Dorsolateral prefrontal cortex (tissue), 120 donors: ENCODE measurements at regions of chr19 and their contacts with region 1.

Region 1: DNA sequence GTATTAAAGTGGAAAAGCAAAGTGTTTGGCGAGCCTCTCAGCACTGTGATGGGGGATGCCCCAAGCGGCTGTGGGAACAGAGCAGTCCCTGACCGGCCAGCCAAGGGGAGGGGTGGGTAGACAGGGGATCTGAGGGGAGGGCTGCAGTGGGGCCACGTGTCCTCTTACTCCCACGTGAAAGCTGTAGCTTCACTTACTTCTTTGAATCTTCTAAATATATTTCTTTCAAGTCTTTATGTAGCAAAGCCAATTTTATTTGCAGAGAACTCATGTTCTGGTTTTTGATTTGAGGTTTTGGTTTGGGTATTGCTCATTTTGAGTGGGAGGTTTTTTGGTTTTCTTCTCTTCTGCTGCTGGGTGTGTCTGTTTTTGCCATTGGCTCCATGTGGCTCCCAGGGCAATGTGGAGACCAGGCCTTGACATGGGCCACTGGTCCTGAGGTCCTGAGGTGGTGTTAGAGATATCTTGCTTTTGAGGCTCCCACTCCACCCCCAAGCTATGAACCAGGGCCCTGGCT is 17.7 kb upstream of the OVOL3 start:
- DNase-seq: no peak
- H3K4me3 ChIP-seq: no peak overlapping the region
- H3K27ac ChIP-seq: peak overlapping the region; percentile 36 to 98 (median 87)
- H3K27me3 ChIP-seq: no peaks in the 10 kb centered on the region
- CTCF ChIP-seq: no peak

Region 2: GRCh38 chr19:35879770-35880317 is 213.4 kb before region 1 on chr19:
- intact Hi-C with region 1: no loop called
- DNase-seq: peak; percentile 76 to 89 (median 84)
- H3K4me3 ChIP-seq: peak overlapping the region in 28 of 59 donors; percentile 0 to 46 (median 20)
- H3K27ac ChIP-seq: peak overlapping the region in 28 of 59 donors; percentile 1 to 65 (median 38)
- H3K27me3 ChIP-seq: no peaks in the 10 kb centered on the region
- CTCF ChIP-seq: peak in 13 of 56 donors; percentile 11 to 47 (median 23)

Region 3: GRCh38 chr19:36081385-36081784 is 11.8 kb before region 1 on chr19:
- intact Hi-C with region 1: loop called in 1 of 2 experiments (anchors 1 kb)
- DNase-seq: peak in 7 of 10 donors; percentile 53 to 88 (median 69)
- H3K4me3 ChIP-seq: peak overlapping the region in 3 of 59 donors; percentile 2 to 24 (median 12)
- H3K27ac ChIP-seq: peak overlapping the region; percentile 0 to 94 (median 83)
- H3K27me3 ChIP-seq: no peaks in the 10 kb centered on the region
- CTCF ChIP-seq: peak in 1 of 56 donors; percentile 22

Region 4: DNA sequence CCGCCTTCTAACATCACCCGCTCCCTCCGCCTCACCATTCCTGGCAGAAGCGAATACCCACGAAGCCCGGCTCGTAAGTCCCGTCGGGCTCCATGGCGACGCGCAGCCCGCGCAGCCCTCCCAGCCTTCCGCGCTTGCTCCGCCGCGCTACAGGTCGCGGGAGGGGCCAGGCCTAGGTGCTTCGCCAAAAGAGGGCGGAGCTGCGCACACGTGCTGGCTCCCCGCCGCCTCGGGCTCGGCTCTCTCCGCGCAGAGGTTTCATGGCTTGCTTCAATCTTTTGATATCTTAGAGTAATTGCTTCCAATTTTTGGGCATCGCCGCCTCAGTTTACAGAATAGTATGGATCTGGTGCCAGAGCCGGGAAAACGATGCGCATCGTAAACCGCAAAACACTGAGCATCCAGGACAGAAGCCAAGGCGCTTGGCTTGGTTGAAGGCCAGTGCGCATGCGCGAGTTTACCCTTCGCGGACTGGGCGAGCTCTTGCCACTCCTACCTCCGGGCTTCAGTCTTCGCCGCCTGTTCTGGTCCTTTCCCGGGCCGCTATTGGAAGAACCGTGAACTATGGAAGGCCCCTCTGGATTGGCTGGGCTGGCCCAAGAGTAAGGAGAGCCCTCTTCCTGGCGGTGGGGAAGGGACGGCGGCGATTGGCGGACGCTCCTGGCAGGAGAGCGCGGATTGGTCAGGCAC is 21.7 kb after region 1 on chr19 and contains the start of gene POLR2I:
- intact Hi-C with region 1: loop called in 1 of 2 experiments (anchors 1 kb)
- DNase-seq: peak; percentile 97 to 100 (median 100)
- H3K4me3 ChIP-seq: peak within 1 kb of the TSS; percentile 61 to 98 (median 92)
- H3K27ac ChIP-seq: peak within 1 kb of the TSS; percentile 75 to 99 (median 95)
- H3K27me3 ChIP-seq: no peaks in the 10 kb centered on the region
- CTCF ChIP-seq: peak in 20 of 56 donors; percentile 1 to 60 (median 20)
- total RNA-seq, gene POLR2I: 61.9 to 165 (median 106) TPM